ENCODE measurements at regions of chr17 and their contacts with region 1.

Region 1: GRCh38 chr17:29931231-29931932 is 1.4 kb upstream of the SSH2 start:
- DNase-seq: peak in 1 of 2 donors; percentile 70
- ATAC-seq: peak; percentile 87
- H3K4me3 ChIP-seq: peak overlapping the region; percentile 39 to 86
- H3K27ac ChIP-seq: no peak overlapping the region
- H3K4me1 ChIP-seq: peaks cover 0 to 2% of the 10 kb centered on the region in 2 donors
- H3K27me3 ChIP-seq: no peaks in the 10 kb centered on the region

Region 2: DNA sequence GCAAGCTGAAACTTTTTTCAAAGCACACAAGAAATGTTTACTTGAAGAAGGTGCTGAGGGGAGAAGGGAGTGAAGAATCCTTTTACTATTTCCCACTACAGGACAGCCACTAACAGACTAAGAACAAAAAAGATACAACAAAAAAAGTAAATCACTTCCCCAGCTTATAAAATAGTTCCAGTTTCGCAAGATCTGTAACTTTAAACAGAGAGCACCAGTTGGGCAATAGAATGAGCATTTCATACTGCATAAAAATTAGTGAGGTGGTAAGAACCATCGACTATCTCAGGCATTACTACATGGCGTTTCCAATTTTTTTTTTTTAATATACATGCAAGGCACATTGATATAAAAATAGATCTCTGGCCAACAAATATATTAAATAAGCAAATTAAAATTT is 673.6 kb before region 1 on chr17:
- intact Hi-C with region 1: no loop called
- DNase-seq: no peak
- ATAC-seq: no peak
- H3K4me3 ChIP-seq: no peak overlapping the region
- H3K27ac ChIP-seq: peak overlapping the region in 1 of 2 donors; percentile 15
- H3K4me1 ChIP-seq: peaks cover 0 to 2% of the 10 kb centered on the region in 2 donors
- H3K27me3 ChIP-seq: no peaks in the 10 kb centered on the region

Region 3: GRCh38 chr17:29579866-29580771 is 351.3 kb before region 1 on chr17:
- intact Hi-C with region 1: loop called in 1 of 2 experiments (anchors 5 kb)
- DNase-seq: peak; percentile 89 to 96
- ATAC-seq: peak; percentile 86
- H3K4me3 ChIP-seq: no peak overlapping the region
- H3K27ac ChIP-seq: no peak overlapping the region
- H3K4me1 ChIP-seq: no peaks in the 10 kb centered on the region
- H3K27me3 ChIP-seq: no peaks in the 10 kb centered on the region

Region 4: DNA sequence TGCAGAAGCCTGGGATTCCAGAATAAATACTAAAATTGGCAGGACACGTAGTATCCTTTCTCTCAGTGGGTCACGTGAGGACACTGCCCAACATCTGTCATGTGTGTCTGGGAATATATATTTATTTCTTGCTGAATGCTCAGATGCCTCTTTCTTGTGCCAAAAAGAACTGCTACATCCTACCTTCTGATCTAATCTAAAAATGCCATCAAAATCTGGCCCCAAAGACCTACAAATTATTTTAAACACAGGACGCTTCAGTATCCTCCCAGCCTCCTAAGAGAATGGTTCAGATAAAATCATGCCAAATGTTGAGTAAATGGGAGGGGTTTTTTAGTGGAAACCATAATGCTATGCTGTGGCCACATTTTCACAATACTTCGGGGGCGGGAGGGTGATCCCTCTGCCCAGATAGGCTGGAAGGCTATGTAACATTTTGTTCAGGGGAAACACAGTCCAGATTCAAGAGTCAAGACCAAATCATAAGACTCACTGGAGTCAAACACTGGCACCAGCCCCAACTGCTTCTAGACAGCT is 285.8 kb before region 1 on chr17:
- intact Hi-C with region 1: loop called (anchors 10 kb)
- DNase-seq: peak; percentile 76 to 80
- ATAC-seq: peak; percentile 87
- H3K4me3 ChIP-seq: no peak overlapping the region
- H3K27ac ChIP-seq: peak overlapping the region; percentile 64 to 76
- H3K4me1 ChIP-seq: peaks cover 0 to 2% of the 10 kb centered on the region in 2 donors
- H3K27me3 ChIP-seq: no peaks in the 10 kb centered on the region

Region 5: GRCh38 chr17:29807520-29808351 is 123.6 kb before region 1 on chr17:
- intact Hi-C with region 1: loop called (anchors 1 kb)
- DNase-seq: peak in 1 of 2 donors; percentile 72
- ATAC-seq: peak; percentile 77
- H3K4me3 ChIP-seq: no peak overlapping the region
- H3K27ac ChIP-seq: no peak overlapping the region
- H3K4me1 ChIP-seq: no peaks in the 10 kb centered on the region
- H3K27me3 ChIP-seq: no peaks in the 10 kb centered on the region

Region 6: DNA sequence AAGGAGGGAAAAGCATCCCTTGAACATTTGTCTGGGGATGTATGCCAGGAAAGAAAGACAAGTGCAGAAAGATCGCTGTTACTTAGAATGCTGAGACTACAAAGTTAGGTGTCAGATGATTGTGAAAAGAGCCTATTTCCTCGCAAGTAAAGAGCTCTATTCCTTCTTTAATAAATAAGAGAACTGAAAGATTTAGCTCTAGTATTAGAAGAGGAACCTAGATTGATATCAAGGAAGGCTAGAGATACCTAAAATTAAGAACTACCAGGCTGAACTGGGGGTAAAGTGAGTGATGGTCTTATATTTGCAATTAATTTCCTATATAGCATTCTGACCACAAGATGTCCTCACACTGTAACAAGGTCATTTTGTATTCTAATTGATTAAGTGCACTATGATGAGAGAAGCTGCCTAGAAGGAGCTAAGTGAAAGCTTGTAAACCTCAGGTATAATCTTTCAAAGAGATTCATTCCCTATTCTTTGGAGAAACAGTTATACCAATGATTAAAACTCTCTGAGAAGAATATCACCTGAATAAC is 63.7 kb before region 1 on chr17:
- intact Hi-C with region 1: loop called in 1 of 2 experiments (anchors 5 kb)
- DNase-seq: no peak
- ATAC-seq: no peak
- H3K4me3 ChIP-seq: no peak overlapping the region
- H3K27ac ChIP-seq: no peak overlapping the region
- H3K4me1 ChIP-seq: peaks cover 0 to 2% of the 10 kb centered on the region in 2 donors
- H3K27me3 ChIP-seq: no peaks in the 10 kb centered on the region

Region 7: GRCh38 chr17:30005709-30006320 is 74.4 kb after region 1 on chr17:
- intact Hi-C with region 1: no loop called
- DNase-seq: no peak
- ATAC-seq: no peak
- H3K4me3 ChIP-seq: no peak overlapping the region
- H3K27ac ChIP-seq: no peak overlapping the region
- H3K4me1 ChIP-seq: no peaks in the 10 kb centered on the region
- H3K27me3 ChIP-seq: no peaks in the 10 kb centered on the region

Region 8: DNA sequence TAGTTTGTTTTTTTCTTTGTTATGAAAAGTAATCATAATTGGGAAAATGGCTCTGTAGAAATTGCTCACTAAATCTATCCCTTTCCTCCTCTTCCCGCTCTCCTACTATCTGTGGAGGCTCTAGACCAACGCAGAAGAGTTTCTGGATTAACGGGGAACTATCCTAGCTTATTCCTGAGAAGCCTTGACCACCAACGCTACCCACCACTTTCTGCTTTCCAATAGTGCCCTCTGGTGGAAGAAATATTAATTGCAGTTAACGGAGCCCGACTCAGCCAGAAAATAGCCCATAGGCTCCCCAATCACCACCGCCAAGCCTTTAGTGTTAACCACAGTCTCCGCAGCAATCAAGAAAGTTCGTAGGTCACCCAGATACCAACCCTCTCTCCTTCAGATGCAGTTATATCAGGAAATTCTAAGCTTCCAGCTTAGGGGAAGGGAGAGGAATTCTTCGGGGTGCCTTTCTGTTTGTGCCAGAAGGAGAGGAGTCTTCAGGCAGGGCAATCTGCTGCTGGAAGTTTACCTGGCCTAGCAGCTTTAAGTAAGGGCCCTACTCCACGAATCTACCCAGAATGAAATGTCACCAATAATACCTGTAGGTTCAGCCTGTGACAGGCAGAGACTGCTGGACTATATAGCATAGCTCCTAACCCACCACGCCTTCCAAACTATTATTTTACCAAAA is 162.2 kb after region 1 on chr17:
- intact Hi-C with region 1: loop called (anchors 5 to 10 kb)
- DNase-seq: no peak
- ATAC-seq: peak; percentile 74
- H3K4me3 ChIP-seq: no peak overlapping the region
- H3K27ac ChIP-seq: no peak overlapping the region
- H3K4me1 ChIP-seq: peaks cover 0 to 6% of the 10 kb centered on the region in 2 donors
- H3K27me3 ChIP-seq: no peaks in the 10 kb centered on the region

Measured in aorta (tissue), 5 donors.